ENCODE measurements at regions of chr22 and their contacts with region 1.

Region 1: DNA sequence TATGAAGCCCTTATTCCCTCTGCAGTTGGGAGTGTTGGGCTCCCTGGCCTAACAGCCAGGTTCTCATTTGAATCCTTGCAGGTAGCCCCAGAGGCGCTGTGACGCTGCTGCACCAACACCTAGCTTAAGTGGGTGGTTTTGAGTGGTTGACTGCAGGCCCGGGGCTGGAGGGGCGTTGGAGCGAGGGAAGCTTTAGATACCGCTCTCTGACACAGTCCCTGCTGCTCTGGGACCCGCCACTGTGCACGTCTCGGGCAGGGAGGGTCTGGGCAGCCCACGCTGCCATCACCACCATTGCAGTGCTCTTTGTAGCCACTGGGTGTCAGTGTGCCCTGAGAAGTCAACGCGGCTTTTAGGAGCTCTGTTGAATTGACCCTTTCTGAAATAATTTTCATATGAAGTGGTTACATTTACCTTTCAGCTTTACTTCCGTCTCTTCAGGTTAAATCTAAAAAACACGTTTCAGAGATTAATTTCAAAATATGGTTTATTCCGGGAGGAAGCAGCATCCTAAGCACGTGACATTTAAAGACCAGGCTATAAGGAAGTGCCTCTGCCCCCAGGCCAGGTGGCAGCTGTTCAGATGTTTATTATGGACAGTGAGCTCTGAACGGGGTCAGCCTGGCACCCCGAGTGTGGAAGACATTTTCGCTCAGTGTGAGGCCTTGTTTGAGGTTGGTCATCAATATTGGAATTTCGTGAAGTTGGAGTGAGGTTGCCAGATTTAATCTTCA is 30.9 kb upstream of the PARVB start:
- DNase-seq: peak; percentile 26
- H3K4me3 ChIP-seq: no peak overlapping the region
- H3K27ac ChIP-seq: no peak overlapping the region
- H3K27me3 ChIP-seq: no peaks in the 10 kb centered on the region
- CTCF ChIP-seq: peak; percentile 98

Region 2: DNA sequence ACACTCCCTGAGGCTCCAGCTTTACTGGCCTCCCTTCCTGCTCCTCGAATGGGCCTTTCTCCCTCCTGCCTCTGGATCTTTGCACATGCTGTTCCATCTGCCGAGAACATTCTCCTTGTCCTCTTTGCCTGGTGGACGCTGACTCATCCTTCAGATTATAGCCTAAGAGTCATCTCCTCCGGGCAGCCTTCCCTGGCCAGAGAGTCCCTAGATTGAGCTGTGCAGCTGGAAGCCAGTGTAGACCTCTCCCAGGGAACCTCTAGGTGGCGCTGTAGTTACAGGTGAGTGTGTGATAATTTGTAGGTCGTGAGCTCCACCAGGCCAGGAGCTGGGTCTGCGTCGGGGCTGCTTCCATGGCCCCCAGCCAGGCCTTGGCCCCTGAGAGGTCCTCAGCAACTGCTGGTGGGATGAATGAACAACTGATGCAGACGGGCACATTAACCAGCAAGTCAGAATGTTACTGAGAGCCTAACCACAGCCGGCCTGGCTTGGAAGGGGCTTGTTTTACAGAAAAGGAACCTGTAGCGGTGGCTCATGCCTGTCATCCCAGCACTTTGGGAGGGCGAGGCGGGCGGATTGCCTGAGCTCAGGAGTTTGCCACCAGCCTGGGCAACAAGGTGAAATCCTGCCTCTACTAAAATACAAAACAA is 110.1 kb before region 1 on chr22:
- in situ Hi-C with region 1: no loop called
- DNase-seq: peak; percentile 71
- H3K4me3 ChIP-seq: no peak overlapping the region
- H3K27ac ChIP-seq: no peak overlapping the region
- H3K27me3 ChIP-seq: peaks cover 3% of the 10 kb centered on the region
- CTCF ChIP-seq: peak; percentile 83

Region 3: DNA sequence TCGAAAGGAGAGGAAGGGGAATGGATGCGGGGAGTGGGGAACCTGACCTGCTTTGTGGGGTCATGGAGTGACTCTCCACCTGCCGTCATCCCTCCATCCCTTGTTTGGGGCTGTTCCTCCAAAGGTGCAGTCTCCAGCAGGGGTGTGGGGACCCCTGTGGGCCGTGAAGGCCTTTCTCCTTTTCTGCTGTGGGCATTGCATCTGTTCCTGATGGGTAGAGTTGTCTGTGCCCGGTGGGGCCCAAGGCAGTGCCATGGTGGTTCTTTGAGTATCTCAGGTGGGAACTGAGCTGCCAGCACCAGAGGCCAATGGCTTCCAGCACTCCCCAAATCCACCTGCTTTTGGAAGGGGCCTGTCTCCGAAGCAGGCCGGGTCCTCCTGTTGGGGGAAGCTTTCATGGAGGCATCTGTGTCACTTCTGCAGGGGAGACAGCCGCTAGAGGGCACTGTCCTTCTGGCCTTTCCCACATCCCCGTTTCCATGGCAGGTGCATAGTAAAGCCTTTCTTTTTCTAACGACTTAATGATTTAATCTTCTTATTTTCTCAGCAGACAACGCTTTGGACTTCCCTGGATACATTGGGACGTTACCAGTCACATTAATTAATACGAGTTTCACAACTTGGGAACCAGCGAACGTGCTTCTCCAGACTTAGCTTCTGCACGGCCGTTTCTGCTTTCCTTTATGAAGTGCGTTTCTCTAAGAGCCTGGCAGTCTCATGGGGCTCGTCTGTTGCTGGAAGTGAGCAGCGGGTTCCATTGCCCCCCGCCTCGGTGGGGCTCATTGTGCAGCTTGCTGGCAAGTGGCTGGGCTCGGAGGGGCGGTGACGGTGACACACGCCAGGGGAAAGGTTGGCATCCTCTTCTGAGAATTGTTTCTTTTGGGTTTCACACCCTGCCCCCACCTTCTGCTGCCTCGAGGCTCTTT is 88.0 kb after region 1 on chr22:
- in situ Hi-C with region 1: loop called (anchors 25 kb)
- DNase-seq: peak; percentile 69
- H3K4me3 ChIP-seq: no peak overlapping the region
- H3K27ac ChIP-seq: no peak overlapping the region
- H3K27me3 ChIP-seq: no peaks in the 10 kb centered on the region
- CTCF ChIP-seq: peak; percentile 97